HepG2 (cell line): ENCODE measurements at regions of chr6 and their contacts with region 1.

Region 1: GRCh38 chr6:96164802-96165201 is 149.0 kb downstream of the FUT9 start:
- DNase-seq: no peak
- ATAC-seq: no peak
- H3K4me3 ChIP-seq: no peak overlapping the region
- H3K27ac ChIP-seq: no peak overlapping the region
- H3K4me1 ChIP-seq: no peaks in the 10 kb centered on the region
- H3K27me3 ChIP-seq: no peaks in the 10 kb centered on the region
- CTCF ChIP-seq: no peak
- EP300 ChIP-seq: no peak
- POLR2A ChIP-seq: no peak
- RAD21 ChIP-seq: no peak

Region 2: DNA sequence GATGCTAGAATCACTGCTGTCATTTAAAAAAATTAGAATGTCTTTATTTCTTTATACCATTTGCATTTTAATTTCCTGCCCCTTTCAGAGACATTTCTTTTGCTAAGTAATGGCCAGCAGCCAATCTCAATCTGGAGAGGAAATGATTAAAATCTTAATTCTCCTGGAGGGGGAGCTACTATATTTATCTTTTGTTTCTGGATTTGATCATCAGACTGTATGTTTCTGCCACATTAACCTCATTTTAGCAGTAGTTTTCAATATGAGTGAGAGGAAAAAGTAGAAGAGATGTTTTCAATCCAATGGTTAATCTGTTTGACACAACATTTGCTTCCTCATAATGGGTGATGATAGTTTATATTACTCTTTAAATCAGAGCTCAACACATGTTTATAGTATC is 11.0 kb before region 1 on chr6:
- CTCF ChIA-PET with region 1: no interaction called
- POLR2A ChIA-PET with region 1: no interaction called
- in situ Hi-C with region 1: no loop called
- intact Hi-C with region 1: loop called (anchors 1 kb)
- DNase-seq: no peak
- ATAC-seq: no peak
- H3K4me3 ChIP-seq: no peak overlapping the region
- H3K27ac ChIP-seq: no peak overlapping the region
- H3K4me1 ChIP-seq: peaks cover 15% of the 10 kb centered on the region
- H3K27me3 ChIP-seq: no peaks in the 10 kb centered on the region
- CTCF ChIP-seq: no peak
- EP300 ChIP-seq: no peak
- POLR2A ChIP-seq: no peak
- RAD21 ChIP-seq: no peak